IMR-90 (cell line): ENCODE measurements at regions of chr9 and their contacts with region 1.

Region 1: DNA sequence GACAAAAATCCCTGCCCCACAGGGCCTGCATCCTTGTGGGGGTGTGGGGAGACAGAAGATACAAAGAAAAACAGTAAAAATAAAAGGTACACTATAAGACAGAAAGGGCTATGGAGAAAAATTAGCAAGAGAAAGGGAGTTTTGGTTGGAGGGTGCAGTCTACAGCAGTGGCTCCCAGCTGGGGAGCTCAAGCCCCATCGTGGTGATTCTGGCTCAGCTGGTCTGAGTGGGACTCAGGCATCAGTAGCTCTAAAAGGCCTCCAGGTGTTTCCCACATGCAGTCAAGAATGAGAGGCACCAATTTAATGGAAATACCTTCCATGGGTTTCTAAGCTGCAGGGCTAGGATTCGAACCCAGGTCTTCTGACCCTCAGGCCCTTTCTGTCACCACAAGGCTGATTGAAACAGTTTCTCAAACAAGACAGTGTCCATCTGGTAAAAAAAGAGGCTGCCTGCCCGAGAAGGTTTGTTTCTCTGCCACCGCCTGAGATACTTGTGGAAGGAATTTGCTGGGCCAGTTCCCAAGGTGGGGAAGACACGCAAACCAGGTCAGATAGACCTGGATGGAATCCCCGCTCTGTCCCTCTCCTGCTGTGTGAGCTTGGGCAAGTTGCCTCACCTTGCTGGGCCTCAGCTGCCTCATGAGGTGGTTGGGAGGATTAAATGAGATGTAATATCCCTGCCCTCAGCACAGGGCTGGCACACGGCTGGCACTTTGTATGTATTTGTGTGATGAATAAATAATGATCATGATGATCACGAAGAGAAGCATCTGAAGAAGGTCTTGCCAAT is 43.1 kb downstream of the COL27A1 start:
- DNase-seq: no peak
- ATAC-seq: no peak
- H3K4me3 ChIP-seq: no peak overlapping the region
- H3K27ac ChIP-seq: no peak overlapping the region
- H3K4me1 ChIP-seq: peaks cover 17% of the 10 kb centered on the region
- H3K27me3 ChIP-seq: no peaks in the 10 kb centered on the region
- CTCF ChIP-seq: no peak
- POLR2A ChIP-seq: no peak
- RAD21 ChIP-seq: no peak

Region 2: DNA sequence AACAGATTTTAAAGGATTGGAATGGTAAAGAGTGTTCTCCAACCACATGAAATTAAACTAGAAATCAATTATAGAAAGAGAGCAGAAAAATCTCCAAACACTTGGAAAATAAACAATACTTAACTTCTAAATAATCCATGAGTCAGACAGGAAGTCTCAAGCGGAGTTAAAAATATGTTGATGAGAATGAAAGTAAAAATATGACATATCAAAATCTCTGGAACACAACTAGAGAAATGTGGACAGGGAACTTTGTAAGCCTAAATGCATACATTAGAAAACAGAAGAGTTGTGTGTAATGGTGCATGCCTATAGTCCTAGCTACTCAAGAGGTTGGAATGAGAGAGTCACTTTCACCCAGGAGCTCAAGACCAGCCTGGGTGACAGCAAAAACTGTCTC is 370.2 kb before region 1 on chr9:
- CTCF ChIA-PET with region 1: no interaction called
- POLR2A ChIA-PET with region 1: no interaction called
- dilution Hi-C with region 1: no loop called
- in situ Hi-C with region 1: no loop called
- intact Hi-C with region 1: no loop called
- DNase-seq: peak; percentile 8
- ATAC-seq: peak; percentile 49
- H3K4me3 ChIP-seq: no peak overlapping the region
- H3K27ac ChIP-seq: no peak overlapping the region
- H3K4me1 ChIP-seq: no peaks in the 10 kb centered on the region
- H3K27me3 ChIP-seq: peaks cover 6% of the 10 kb centered on the region
- CTCF ChIP-seq: no peak
- POLR2A ChIP-seq: no peak
- RAD21 ChIP-seq: no peak

Region 3: DNA sequence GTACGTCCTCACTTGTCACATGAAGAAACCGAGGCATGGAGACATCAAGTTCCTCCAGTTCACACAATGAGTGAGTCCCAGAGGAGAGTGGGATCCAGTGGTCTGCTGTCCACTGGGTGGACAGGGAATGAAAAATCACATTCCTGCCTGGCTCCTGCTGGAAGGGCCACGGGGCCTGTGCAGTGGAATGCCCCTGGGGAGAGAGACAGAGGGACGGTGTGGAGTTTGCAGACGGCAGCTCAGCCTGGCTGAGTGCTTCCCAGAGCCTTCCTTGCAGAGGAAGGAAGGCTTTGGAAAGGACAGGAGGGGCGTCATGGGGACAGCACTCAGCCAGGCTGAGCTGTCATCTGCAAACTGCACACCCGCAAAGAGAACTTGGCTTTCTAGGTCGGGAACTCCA is 31.6 kb after region 1 on chr9:
- CTCF ChIA-PET with region 1: no interaction called
- POLR2A ChIA-PET with region 1: no interaction called
- dilution Hi-C with region 1: no loop called
- in situ Hi-C with region 1: no loop called
- intact Hi-C with region 1: loop called (anchors 1 kb)
- DNase-seq: no peak
- ATAC-seq: no peak
- H3K4me3 ChIP-seq: no peak overlapping the region
- H3K27ac ChIP-seq: no peak overlapping the region
- H3K4me1 ChIP-seq: peaks cover 7% of the 10 kb centered on the region
- H3K27me3 ChIP-seq: no peaks in the 10 kb centered on the region
- CTCF ChIP-seq: no peak
- POLR2A ChIP-seq: no peak
- RAD21 ChIP-seq: no peak